ENCODE measurements at regions of chr9 and their contacts with region 1.

Region 1: DNA sequence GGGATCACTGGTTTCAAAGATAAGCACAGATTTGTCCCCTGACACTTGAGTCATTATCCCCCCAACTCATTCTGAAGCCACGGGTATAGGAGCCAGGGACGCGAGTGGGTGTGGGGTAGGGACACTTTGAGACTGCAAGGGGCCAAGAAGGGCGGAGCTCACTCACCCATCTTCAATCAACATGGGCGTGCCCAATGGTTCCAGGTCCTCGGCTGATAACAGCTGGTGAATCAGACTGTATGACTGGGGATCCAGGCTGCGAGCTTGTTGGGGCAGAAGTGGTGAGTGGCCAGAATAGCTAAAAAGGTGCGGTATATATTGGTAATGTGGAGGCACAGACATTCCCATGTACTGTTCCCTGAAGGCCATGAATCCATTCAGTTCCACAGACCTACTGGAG is 30.7 kb upstream of the NR5A1 start:
- DNase-seq: no peak
- H3K4me3 ChIP-seq: no peak overlapping the region
- H3K27ac ChIP-seq: no peak overlapping the region
- H3K4me1 ChIP-seq: no peaks in the 10 kb centered on the region
- H3K27me3 ChIP-seq: peaks cover 5 to 12% of the 10 kb centered on the region in 2 experiments
- CTCF ChIP-seq: no peak
- POLR2A ChIP-seq: no peak

Region 2: GRCh38 chr9:124180557-124180956 is 357.4 kb before region 1 on chr9:
- CTCF ChIA-PET with region 1: no interaction called
- POLR2A ChIA-PET with region 1: no interaction called
- dilution Hi-C with region 1: no loop called
- intact Hi-C with region 1: no loop called
- DNase-seq: peak; percentile 22
- H3K4me3 ChIP-seq: no peak overlapping the region
- H3K27ac ChIP-seq: no peak overlapping the region
- H3K4me1 ChIP-seq: no peaks in the 10 kb centered on the region
- H3K27me3 ChIP-seq: peaks cover 14 to 23% of the 10 kb centered on the region in 2 experiments
- CTCF ChIP-seq: no peak
- POLR2A ChIP-seq: no peak

Region 3: GRCh38 chr9:124392871-124393460 is 145.0 kb before region 1 on chr9:
- CTCF ChIA-PET with region 1: interaction called, 26 read pairs
- POLR2A ChIA-PET with region 1: no interaction called
- dilution Hi-C with region 1: no loop called
- intact Hi-C with region 1: no loop called
- DNase-seq: peak; percentile 75
- H3K4me3 ChIP-seq: no peak overlapping the region
- H3K27ac ChIP-seq: peak overlapping the region; percentile 54
- H3K4me1 ChIP-seq: peaks cover 34% of the 10 kb centered on the region
- H3K27me3 ChIP-seq: no peaks in the 10 kb centered on the region
- CTCF ChIP-seq: peak; percentile 29 to 55
- POLR2A ChIP-seq: no peak

Region 4: DNA sequence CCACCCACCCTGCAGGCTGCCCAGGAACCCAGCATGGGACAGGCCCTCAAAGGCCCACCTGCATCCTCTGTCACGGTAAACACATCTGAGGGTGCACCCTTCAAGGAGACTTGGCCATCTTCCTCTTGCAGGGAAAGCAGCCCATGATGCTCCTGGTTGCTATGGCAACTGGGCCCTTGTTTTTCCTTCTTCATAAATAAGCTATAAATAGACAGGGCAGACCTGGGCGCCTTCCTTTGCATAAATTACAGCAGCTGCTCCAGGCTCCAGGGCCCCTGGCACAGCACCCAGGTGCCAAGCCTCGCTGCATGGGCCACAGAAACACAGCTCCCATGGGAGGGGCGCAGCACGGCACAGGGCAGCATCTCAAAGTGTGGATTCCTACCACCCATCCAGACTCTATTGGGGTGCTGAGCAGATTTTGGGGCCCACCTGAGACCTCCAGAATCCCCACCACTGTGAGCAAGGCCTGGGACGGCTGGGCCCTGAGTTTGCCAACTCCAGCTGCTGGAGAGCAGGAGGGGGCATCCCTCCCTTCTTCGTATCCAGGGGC is 116.9 kb before region 1 on chr9:
- CTCF ChIA-PET with region 1: interaction called, 146 read pairs
- POLR2A ChIA-PET with region 1: no interaction called
- dilution Hi-C with region 1: no loop called
- intact Hi-C with region 1: loop called (anchors 1 kb)
- DNase-seq: no peak
- H3K4me3 ChIP-seq: no peak overlapping the region
- H3K27ac ChIP-seq: no peak overlapping the region
- H3K4me1 ChIP-seq: no peaks in the 10 kb centered on the region
- H3K27me3 ChIP-seq: peaks cover 4 to 12% of the 10 kb centered on the region in 2 experiments
- CTCF ChIP-seq: no peak
- POLR2A ChIP-seq: no peak

Region 5: DNA sequence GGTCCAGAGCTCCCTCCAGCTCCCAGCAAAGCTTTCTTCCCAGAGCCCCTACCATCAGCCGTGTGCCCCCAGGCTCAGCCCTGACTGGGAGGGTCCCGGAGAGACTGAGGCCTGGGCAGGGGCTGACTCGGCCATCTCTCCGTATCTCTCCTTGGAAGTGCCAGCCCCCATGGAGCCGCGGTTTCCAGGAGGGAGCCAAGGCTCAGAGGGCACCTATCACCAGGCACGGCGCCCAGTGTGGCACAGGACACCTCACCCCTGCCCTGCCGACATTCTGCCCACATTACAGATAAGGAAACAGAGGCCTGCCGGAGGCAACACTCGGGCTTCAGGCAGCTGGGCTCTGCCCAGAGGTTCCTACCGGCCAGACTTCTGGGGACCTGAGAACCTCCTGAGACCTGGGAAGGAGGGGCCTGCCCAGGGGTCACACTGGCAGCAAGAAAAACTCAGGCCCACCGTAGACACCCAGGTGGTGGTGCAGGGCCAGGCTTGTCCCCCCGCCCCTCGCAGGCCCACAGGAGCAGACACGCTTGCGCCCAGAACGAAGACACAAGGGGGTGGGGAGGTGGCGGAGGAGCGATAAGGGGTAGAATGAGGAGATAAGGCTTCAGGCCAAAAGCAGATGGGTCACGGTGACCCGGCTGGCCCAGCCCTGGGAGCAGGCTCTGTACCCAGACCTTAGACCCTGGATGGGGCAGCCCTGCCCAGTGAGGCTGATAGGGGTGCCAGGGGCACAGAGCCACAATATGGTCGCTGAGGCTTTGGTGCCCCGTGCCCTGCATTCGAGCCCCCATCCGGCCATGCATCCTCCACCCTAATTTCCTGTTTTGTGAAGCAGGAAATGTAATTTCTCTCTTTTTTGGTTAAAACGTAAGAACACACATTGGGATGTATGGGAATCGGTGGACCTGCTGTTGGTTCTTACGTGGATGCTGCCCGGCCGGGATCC is 42.5 kb before region 1 on chr9:
- CTCF ChIA-PET with region 1: no interaction called
- POLR2A ChIA-PET with region 1: no interaction called
- dilution Hi-C with region 1: no loop called
- intact Hi-C with region 1: no loop called
- DNase-seq: no peak
- H3K4me3 ChIP-seq: no peak overlapping the region
- H3K27ac ChIP-seq: no peak overlapping the region
- H3K4me1 ChIP-seq: no peaks in the 10 kb centered on the region
- H3K27me3 ChIP-seq: no peaks in the 10 kb centered on the region
- CTCF ChIP-seq: no peak
- POLR2A ChIP-seq: no peak

Region 6: DNA sequence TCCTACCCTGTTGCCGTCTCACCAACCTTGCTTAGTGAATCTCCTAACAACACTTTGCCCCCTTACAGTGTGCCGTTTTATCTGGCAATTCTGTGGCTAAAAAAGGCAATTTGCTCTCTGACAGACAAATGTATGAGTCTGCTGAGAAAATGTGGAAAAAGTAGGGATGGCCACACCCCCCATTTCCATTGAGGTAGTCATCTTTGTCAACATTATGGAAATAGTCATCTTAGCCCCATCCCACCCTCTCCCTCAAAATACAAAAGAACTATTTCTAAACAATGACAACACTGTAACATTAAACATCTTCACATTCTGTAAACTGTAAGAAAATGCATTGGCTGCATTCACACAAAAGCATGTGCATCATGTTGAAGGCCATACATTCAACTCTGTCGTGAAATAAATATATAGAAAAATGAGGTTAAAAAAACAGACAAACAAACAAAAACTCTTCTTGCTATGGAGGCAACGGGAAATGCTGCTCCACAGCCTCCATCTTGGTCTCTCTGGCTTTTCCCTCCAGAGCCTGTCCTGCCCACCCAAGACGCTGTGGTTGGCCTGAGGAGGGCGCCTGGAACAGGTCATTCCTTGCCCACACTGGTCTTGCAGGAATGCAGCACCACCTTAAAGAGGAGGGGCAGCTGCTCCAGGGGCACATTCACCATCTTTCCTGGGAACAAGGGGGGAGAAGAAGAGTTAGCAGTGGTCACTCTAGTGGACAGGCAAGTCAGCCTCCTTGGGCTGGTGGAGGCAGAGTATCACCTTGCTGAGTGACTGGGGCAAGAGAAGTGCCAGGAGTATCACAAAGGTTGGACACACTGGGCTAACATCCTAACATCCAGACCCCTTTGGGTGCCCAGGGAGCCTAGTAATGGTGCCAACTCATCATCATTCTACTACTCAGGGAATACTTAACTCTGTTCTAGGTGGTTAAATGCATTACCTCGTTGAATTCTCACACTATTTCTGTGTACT is 15.5 kb before region 1 on chr9:
- CTCF ChIA-PET with region 1: interaction called, 40 read pairs
- POLR2A ChIA-PET with region 1: no interaction called
- dilution Hi-C with region 1: no loop called
- intact Hi-C with region 1: no loop called
- DNase-seq: no peak
- H3K4me3 ChIP-seq: no peak overlapping the region
- H3K27ac ChIP-seq: no peak overlapping the region
- H3K4me1 ChIP-seq: no peaks in the 10 kb centered on the region
- H3K27me3 ChIP-seq: peaks cover 2% of the 10 kb centered on the region in 2 experiments
- CTCF ChIP-seq: no peak
- POLR2A ChIP-seq: no peak

Region 7: DNA sequence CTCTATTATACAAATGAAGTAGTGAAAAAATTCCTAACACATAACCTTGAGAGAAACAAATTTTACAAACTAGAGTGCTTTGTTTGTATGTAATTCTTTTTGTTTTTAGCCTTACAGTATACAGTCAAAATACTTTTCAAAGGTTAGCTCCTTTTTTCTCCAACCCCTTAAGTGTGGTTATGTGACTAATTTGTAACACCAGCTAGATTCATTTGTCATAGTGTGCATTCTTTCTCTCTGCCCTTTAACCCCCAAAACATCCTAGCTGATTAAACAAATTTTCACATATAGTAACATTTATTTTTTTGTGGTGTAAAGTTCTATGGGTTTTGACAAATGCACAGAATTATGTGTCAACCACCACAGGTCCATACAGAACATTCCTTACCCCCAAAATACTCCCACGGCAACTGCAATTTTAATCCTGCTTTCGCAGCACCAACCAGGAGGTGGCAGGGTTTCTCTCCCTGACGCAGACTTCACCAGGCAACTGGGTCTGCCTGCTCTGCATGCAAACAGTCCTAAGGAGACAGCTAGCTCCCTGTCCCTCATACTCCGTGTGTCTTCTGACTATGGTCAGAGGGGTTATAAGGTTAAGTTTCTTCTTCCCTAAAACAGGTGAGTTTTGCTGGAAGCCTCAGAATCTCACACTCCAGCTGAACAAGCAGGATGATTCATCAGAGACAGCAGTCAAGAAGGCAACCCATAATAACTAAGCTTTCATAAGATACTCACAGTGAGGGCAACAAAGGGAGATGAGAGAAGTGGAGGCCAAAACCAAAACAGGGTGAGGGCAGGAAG is 13.7 kb after region 1 on chr9:
- CTCF ChIA-PET with region 1: interaction called, 27 read pairs
- POLR2A ChIA-PET with region 1: no interaction called
- dilution Hi-C with region 1: no loop called
- intact Hi-C with region 1: no loop called
- DNase-seq: peak; percentile 59
- H3K4me3 ChIP-seq: no peak overlapping the region
- H3K27ac ChIP-seq: no peak overlapping the region
- H3K4me1 ChIP-seq: no peaks in the 10 kb centered on the region
- H3K27me3 ChIP-seq: peaks cover 11 to 13% of the 10 kb centered on the region in 2 experiments
- CTCF ChIP-seq: peak; percentile 61 to 62
- POLR2A ChIP-seq: no peak

Region 8: GRCh38 chr9:125003332-125003731 is 465.4 kb after region 1 on chr9:
- CTCF ChIA-PET with region 1: no interaction called
- POLR2A ChIA-PET with region 1: no interaction called
- dilution Hi-C with region 1: no loop called
- intact Hi-C with region 1: no loop called
- DNase-seq: no peak
- H3K4me3 ChIP-seq: no peak overlapping the region
- H3K27ac ChIP-seq: no peak overlapping the region
- H3K4me1 ChIP-seq: no peaks in the 10 kb centered on the region
- H3K27me3 ChIP-seq: no peaks in the 10 kb centered on the region
- CTCF ChIP-seq: no peak
- POLR2A ChIP-seq: no peak

Measured in endothelial cell of umbilical vein (primary cell).